Right ventricle myocardium inferior (tissue), 1 donor: ENCODE measurements at regions of chr9 and their contacts with region 1.

Region 1: GRCh38 chr9:134099123-134099787 is 31.4 kb upstream of the BRD3 start:
- DNase-seq: no peak
- ATAC-seq: no peak

Region 2: DNA sequence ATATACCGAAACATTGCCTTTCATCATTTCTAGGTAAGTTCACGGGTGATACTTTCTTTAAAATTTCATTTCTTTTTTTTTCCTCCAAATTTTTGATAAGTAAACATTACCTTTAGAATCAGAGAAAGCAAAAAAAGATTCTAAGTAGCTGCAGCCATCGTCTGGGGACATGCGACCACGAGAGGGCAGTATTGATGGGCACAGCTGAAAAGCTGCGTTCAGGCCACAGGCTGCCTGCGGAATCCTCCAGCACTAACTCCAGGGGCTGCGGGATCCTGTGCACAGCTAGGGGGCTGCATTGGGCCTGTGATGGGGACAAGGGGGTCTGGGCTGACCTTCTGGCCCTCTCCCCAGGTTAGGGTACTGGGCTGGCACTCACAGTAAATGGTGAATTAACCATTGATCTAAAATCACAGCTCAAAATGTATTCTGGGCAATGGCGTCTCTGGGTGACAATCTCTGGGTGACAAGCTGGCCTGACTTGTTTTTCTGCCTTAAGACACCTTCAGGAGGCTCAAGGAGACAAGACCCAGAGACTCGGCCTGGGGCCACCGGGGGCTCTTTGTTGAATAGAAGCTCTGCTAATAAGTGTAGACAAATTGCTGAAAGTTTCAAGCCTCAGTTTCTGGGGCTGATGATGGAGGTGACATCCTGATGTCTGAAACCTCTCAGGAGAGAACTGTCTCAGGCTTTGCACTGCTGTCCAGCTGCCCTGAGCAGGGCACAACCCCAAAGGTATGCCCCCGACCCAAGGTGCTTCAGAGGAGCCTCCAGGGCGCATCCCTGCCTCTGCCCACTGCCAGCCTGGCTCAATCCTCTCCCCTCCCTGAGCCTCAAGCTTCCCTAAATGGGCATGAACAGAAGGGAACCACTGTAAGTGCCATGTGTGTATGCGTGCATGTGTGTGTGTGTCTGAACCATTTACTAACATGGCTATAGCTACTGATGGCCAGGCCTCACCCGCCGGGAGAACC is 316.8 kb before region 1 on chr9:
- intact Hi-C with region 1: loop called (anchors 5 kb)
- DNase-seq: peak; percentile 74
- ATAC-seq: no peak

Region 3: DNA sequence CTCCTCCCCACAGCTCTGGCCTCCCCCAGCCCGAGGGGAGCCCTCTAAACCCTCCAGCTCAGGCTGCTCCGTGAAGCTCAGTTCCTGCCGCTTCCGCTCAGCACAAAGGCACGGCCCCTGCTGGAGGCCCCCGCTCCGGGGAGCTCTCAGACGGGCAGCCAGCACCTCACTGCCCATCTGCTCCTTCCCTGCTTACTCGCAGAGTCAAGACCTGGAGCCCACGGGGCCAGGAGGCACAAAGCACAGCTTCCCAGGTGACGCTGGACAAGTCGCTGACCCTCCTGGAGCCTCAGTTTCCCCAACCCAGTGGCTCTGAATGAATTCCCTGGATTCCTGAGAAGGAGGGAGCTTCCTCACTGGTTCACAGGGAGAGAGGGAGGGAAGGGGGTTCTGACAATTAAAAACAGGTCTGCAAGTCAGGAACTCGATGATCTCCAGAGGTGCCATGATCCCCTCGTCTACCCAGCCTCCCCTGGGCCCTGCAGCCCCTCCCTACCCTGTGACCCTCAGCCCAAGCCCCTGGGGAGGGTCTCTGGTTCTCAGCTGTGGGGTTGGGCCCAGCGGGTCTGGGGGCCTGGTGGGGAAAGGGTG is 143.3 kb before region 1 on chr9:
- intact Hi-C with region 1: no loop called
- DNase-seq: peak; percentile 53
- ATAC-seq: no peak